ENCODE measurements at regions of chr1 and their contacts with region 1.

Region 1: GRCh38 chr1:101136739-101137138 is 100.1 kb upstream of the S1PR1 start:
- DNase-seq: peak in 7 of 9 donors; percentile 11 to 59 (median 45)
- ATAC-seq: peak; percentile 77
- H3K4me3 ChIP-seq: no peak overlapping the region
- H3K4me3 Mint-ChIP-seq: peak overlapping the region in 9 of 10 donors; percentile 23 to 62 (median 49)
- H3K27ac ChIP-seq: peak overlapping the region; percentile 19
- H3K27ac Mint-ChIP-seq: peak overlapping the region; percentile 67 to 93 (median 85)
- H3K4me1 ChIP-seq: peaks cover 17 to 32% of the 10 kb centered on the region in 2 donors
- H3K4me1 Mint-ChIP-seq: peaks cover 37 to 67% (median 66%) of the 10 kb centered on the region in 7 donors
- H3K27me3 ChIP-seq: no peaks in the 10 kb centered on the region
- H3K27me3 Mint-ChIP-seq: no peaks in the 10 kb centered on the region

Region 2: GRCh38 chr1:100921109-100921706 is 215.5 kb before region 1 on chr1:
- CTCF ChIA-PET with region 1: interaction called, 10 read pairs
- POLR2A ChIA-PET with region 1: no interaction called
- intact Hi-C with region 1: loop called (anchors 1 to 2 kb)
- DNase-seq: peak in 6 of 9 donors; percentile 35 to 62 (median 50)
- ATAC-seq: peak; percentile 77
- H3K4me3 ChIP-seq: no peak overlapping the region
- H3K4me3 Mint-ChIP-seq: peak overlapping the region in 1 of 10 donors; percentile 6
- H3K27ac ChIP-seq: peak overlapping the region; percentile 38
- H3K27ac Mint-ChIP-seq: peak overlapping the region in 8 of 9 donors; percentile 28 to 92 (median 88)
- H3K4me1 ChIP-seq: peaks cover 27 to 37% of the 10 kb centered on the region in 2 donors
- H3K4me1 Mint-ChIP-seq: peaks cover 13 to 62% (median 43%) of the 10 kb centered on the region in 7 donors
- H3K27me3 ChIP-seq: no peaks in the 10 kb centered on the region
- H3K27me3 Mint-ChIP-seq: no peaks in the 10 kb centered on the region

Region 3: GRCh38 chr1:101122452-101123166 is 14.1 kb before region 1 on chr1:
- CTCF ChIA-PET with region 1: interaction called, 12 read pairs
- POLR2A ChIA-PET with region 1: interaction called, 10 read pairs
- intact Hi-C with region 1: no loop called
- DNase-seq: peak in 3 of 9 donors; percentile 19 to 32 (median 28)
- ATAC-seq: peak; percentile 66
- H3K4me3 ChIP-seq: no peak overlapping the region
- H3K4me3 Mint-ChIP-seq: peak overlapping the region; percentile 12 to 81 (median 59)
- H3K27ac ChIP-seq: peak overlapping the region; percentile 63
- H3K27ac Mint-ChIP-seq: peak overlapping the region; percentile 36 to 95 (median 91)
- H3K4me1 ChIP-seq: peaks cover 26 to 32% of the 10 kb centered on the region in 2 donors
- H3K4me1 Mint-ChIP-seq: peaks cover 28 to 83% (median 65%) of the 10 kb centered on the region in 7 donors
- H3K27me3 ChIP-seq: no peaks in the 10 kb centered on the region
- H3K27me3 Mint-ChIP-seq: peaks cover 0 to 4% (median 0%) of the 10 kb centered on the region in 5 donors

Region 4: GRCh38 chr1:101170506-101171050 is 33.8 kb after region 1 on chr1:
- CTCF ChIA-PET with region 1: no interaction called
- POLR2A ChIA-PET with region 1: no interaction called
- intact Hi-C with region 1: no loop called
- DNase-seq: no peak
- ATAC-seq: no peak
- H3K4me3 ChIP-seq: no peak overlapping the region
- H3K4me3 Mint-ChIP-seq: no peak overlapping the region
- H3K27ac ChIP-seq: no peak overlapping the region
- H3K27ac Mint-ChIP-seq: no peak overlapping the region
- H3K4me1 ChIP-seq: no peaks in the 10 kb centered on the region
- H3K4me1 Mint-ChIP-seq: peaks cover 0 to 28% (median 4%) of the 10 kb centered on the region in 7 donors
- H3K27me3 ChIP-seq: no peaks in the 10 kb centered on the region
- H3K27me3 Mint-ChIP-seq: no peaks in the 10 kb centered on the region

Region 5: GRCh38 chr1:101282314-101283038 is 145.7 kb after region 1 on chr1:
- CTCF ChIA-PET with region 1: interaction called, 65 read pairs
- POLR2A ChIA-PET with region 1: interaction called, 14 read pairs
- intact Hi-C with region 1: loop called in 1 of 2 experiments (anchors 1 kb)
- DNase-seq: no peak
- ATAC-seq: no peak
- H3K4me3 ChIP-seq: no peak overlapping the region
- H3K4me3 Mint-ChIP-seq: peak overlapping the region in 7 of 10 donors; percentile 11 to 94 (median 84)
- H3K27ac ChIP-seq: peak overlapping the region; percentile 77
- H3K27ac Mint-ChIP-seq: peak overlapping the region in 8 of 9 donors; percentile 85 to 99 (median 98)
- H3K4me1 ChIP-seq: peaks cover 92 to 95% of the 10 kb centered on the region in 2 donors
- H3K4me1 Mint-ChIP-seq: peaks cover 67 to 96% (median 95%) of the 10 kb centered on the region in 7 donors
- H3K27me3 ChIP-seq: no peaks in the 10 kb centered on the region
- H3K27me3 Mint-ChIP-seq: peaks cover 0 to 2% (median 0%) of the 10 kb centered on the region in 5 donors

Region 6: DNA sequence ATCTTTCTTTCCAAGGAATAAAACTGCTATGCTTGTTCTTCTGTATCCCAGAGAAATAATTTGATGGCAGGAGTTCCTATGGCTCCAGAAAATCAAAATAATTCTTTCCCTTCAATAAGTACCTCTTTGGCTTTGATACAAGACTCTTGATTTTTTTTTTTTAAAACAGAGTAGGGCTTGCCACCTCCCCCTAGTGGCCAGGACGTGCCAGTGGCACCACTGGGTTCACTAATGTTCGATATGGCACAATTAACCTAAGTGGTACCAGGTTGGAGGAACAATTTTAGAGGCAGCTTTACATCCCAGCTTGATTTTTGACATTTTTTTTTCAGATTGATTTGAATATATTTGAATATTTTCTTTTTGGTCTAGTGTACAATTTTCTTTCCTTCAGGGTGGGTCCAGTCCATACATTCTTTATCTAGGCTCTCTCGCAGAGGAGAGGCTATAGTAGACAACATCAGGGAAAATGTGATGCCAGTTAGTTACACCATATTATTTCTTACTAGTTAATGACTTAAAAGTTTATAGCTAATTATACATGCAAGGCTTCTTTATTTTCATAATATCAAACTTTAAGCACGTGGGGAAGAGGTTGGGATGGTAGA is 430.9 kb after region 1 on chr1:
- CTCF ChIA-PET with region 1: no interaction called
- POLR2A ChIA-PET with region 1: no interaction called
- intact Hi-C with region 1: loop called in 1 of 2 experiments (anchors 2 kb)
- DNase-seq: peak in 7 of 9 donors; percentile 18 to 53 (median 42)
- ATAC-seq: peak; percentile 80
- H3K4me3 ChIP-seq: no peak overlapping the region
- H3K4me3 Mint-ChIP-seq: no peak overlapping the region
- H3K27ac ChIP-seq: no peak overlapping the region
- H3K27ac Mint-ChIP-seq: no peak overlapping the region
- H3K4me1 ChIP-seq: no peaks in the 10 kb centered on the region
- H3K4me1 Mint-ChIP-seq: peaks cover 0 to 1% (median 0%) of the 10 kb centered on the region in 7 donors
- H3K27me3 ChIP-seq: no peaks in the 10 kb centered on the region
- H3K27me3 Mint-ChIP-seq: peaks cover 0 to 31% (median 15%) of the 10 kb centered on the region in 5 donors

Region 7: DNA sequence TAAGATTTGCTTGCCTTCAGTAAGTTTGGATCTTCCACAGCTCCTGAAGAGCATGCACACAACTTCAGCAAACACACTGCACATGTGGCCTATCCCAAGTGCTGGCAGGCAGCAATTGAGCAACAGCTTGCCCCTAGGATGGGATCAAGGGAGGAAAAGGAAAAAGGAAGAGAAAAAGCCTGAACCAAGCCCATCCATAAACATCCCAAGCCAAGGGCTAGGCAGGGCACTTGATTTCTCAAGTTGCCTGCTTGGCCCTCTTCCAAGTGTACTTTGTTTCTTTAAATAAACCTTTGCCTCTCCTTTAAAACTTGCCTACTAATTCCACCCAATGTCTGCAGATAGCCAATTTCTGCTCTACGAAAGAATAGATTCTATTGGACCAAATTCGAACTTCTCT is 909.0 kb after region 1 on chr1:
- CTCF ChIA-PET with region 1: no interaction called
- POLR2A ChIA-PET with region 1: no interaction called
- intact Hi-C with region 1: no loop called
- DNase-seq: no peak
- ATAC-seq: no peak
- H3K4me3 ChIP-seq: no peak overlapping the region
- H3K4me3 Mint-ChIP-seq: no peak overlapping the region
- H3K27ac ChIP-seq: no peak overlapping the region
- H3K27ac Mint-ChIP-seq: no peak overlapping the region
- H3K4me1 ChIP-seq: no peaks in the 10 kb centered on the region
- H3K4me1 Mint-ChIP-seq: no peaks in the 10 kb centered on the region
- H3K27me3 ChIP-seq: no peaks in the 10 kb centered on the region
- H3K27me3 Mint-ChIP-seq: no peaks in the 10 kb centered on the region

Measured in naive thymus-derived CD4-positive, alpha-beta T cell (primary cell).